A673 (cell line): ENCODE measurements at regions of chr15 and their contacts with region 1.

Region 1: GRCh38 chr15:47196057-47196456 is 521.2 kb upstream of the SEMA6D start:
- DNase-seq: peak; percentile 98
- H3K4me3 ChIP-seq: no peak overlapping the region
- H3K27ac ChIP-seq: peak overlapping the region; percentile 22
- H3K4me1 ChIP-seq: peaks cover 46% of the 10 kb centered on the region
- H3K27me3 ChIP-seq: no peaks in the 10 kb centered on the region
- CTCF ChIP-seq: peak; percentile 88

Region 2: GRCh38 chr15:47129033-47129432 is 67.0 kb before region 1 on chr15:
- CTCF ChIA-PET with region 1: no interaction called
- POLR2A ChIA-PET with region 1: no interaction called
- intact Hi-C with region 1: no loop called
- DNase-seq: no peak
- H3K4me3 ChIP-seq: no peak overlapping the region
- H3K27ac ChIP-seq: no peak overlapping the region
- H3K4me1 ChIP-seq: no peaks in the 10 kb centered on the region
- H3K27me3 ChIP-seq: peaks cover 5% of the 10 kb centered on the region
- CTCF ChIP-seq: no peak

Region 3: DNA sequence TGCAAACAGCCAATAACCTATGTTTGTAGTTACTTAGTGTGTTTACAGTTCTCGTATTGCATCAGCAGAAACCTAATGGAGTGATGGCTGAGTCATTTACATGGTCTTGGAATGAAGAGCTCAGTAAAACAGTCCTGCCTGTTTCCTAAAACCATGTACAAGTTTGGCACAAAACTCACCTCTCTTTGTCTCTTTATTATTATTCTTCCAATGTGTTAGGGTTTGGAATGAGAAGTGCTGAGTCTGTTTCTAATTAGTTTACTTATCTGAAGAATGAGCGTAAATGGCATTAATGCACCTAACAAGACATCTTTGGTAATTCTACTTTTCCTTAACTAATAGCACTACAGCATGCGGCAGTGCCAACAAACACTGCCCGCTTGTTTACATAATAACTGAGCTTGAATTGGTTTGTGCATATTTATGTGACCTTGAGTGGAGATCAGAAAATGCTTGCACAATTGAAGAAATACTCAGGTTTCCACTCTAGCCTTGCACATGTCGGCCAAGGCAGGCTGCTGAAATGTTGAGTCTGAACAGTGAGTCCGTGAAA is 135.9 kb after region 1 on chr15:
- CTCF ChIA-PET with region 1: no interaction called
- POLR2A ChIA-PET with region 1: no interaction called
- intact Hi-C with region 1: no loop called
- DNase-seq: peak; percentile 16
- H3K4me3 ChIP-seq: no peak overlapping the region
- H3K27ac ChIP-seq: peak overlapping the region; percentile 3
- H3K4me1 ChIP-seq: peaks cover 12% of the 10 kb centered on the region
- H3K27me3 ChIP-seq: no peaks in the 10 kb centered on the region
- CTCF ChIP-seq: no peak

Region 4: GRCh38 chr15:47422901-47423665 is 227.0 kb after region 1 on chr15:
- CTCF ChIA-PET with region 1: interaction called, 3 read pairs
- POLR2A ChIA-PET with region 1: interaction called, 3 read pairs
- intact Hi-C with region 1: loop called (anchors 1 kb)
- DNase-seq: no peak
- H3K4me3 ChIP-seq: no peak overlapping the region
- H3K27ac ChIP-seq: peak overlapping the region; percentile 84
- H3K4me1 ChIP-seq: peaks cover 68% of the 10 kb centered on the region
- H3K27me3 ChIP-seq: no peaks in the 10 kb centered on the region
- CTCF ChIP-seq: no peak

Region 5: DNA sequence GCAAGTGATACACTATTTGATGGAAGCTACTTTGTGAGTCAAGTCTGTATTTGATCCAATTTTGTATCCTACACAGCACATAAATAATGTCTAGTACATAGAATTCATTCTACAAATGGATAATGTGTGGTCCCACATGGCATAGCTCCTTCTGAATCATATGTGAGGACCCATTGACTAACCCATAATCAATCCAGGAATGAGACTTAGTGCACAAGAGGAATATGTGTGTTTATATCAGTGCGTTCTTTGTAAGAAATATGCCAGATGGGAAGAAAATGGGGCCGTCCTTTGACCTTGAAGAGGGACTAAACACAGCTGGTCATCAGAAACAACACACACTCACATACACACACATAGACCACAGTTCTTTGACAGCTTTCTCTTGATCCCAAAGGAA is 238.5 kb after region 1 on chr15:
- CTCF ChIA-PET with region 1: no interaction called
- POLR2A ChIA-PET with region 1: no interaction called
- intact Hi-C with region 1: no loop called
- DNase-seq: no peak
- H3K4me3 ChIP-seq: no peak overlapping the region
- H3K27ac ChIP-seq: no peak overlapping the region
- H3K4me1 ChIP-seq: no peaks in the 10 kb centered on the region
- H3K27me3 ChIP-seq: no peaks in the 10 kb centered on the region
- CTCF ChIP-seq: no peak

Region 6: DNA sequence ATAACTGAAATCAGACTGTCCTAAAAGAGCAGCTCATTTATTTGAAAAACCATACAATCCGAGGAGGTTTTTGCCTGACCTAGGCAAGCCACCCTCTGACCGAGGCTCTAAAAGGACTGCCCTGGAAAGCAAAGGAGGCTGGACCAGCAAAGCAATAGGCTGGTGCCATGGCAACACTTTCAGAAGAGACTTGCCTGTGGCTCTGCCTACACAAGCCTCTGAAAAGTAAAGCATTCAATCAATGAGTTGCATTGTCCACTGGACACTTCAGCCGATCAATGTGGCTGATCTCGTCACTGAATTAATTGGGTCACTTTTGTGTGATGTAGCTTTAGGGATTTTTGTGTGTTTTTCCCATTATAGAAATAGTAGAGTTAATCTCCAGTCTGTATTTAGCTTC is 422.2 kb after region 1 on chr15:
- CTCF ChIA-PET with region 1: interaction called, 5 read pairs
- POLR2A ChIA-PET with region 1: no interaction called
- intact Hi-C with region 1: loop called (anchors 1 kb)
- DNase-seq: no peak
- H3K4me3 ChIP-seq: no peak overlapping the region
- H3K27ac ChIP-seq: no peak overlapping the region
- H3K4me1 ChIP-seq: peaks cover 8% of the 10 kb centered on the region
- H3K27me3 ChIP-seq: no peaks in the 10 kb centered on the region
- CTCF ChIP-seq: no peak

Region 7: GRCh38 chr15:47663101-47663500 is 467.0 kb after region 1 on chr15:
- CTCF ChIA-PET with region 1: no interaction called
- POLR2A ChIA-PET with region 1: no interaction called
- intact Hi-C with region 1: no loop called
- DNase-seq: no peak
- H3K4me3 ChIP-seq: no peak overlapping the region
- H3K27ac ChIP-seq: no peak overlapping the region
- H3K4me1 ChIP-seq: peaks cover 31% of the 10 kb centered on the region
- H3K27me3 ChIP-seq: no peaks in the 10 kb centered on the region
- CTCF ChIP-seq: no peak

Region 8: DNA sequence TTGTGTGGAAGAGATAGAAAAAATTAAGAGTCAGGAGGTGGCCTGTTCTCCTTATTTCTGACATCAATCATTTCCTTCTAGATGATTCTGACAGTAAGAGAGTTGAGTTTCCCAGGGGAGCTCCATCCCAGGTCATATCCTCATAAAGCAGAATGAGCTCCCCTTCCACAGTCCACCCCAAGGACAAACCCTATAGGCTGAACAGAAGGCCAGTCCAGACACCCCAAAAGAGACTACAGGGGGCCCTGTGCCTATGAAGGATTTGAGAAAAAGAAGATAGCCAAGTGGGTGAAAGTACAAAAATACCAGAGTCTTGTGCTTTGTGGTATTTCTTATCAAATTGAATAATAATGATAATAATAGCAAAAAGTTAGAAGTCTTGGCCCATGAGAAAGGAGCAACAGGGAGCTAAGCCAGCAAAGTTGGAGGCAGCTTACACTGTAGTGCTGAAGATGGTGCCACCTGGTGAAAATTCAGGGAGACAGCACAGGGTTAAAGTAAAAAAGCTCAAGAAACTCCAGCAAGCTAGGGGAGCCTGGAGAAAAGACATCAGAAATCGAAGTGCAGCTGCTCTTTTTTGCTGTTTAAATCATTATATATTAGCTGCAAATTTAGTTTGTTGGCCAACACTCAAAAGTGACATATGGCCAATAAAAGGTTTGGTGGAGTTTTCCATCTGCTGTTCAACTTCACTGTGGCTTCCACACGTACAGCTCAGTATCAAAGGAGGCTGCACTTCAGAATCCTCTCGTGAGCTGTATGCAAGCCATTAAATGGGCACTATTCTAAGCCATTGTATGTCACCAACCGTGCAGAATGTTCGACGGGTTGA is 888.9 kb after region 1 on chr15:
- CTCF ChIA-PET with region 1: interaction called, 20 read pairs
- POLR2A ChIA-PET with region 1: no interaction called
- intact Hi-C with region 1: loop called (anchors 2 kb)
- DNase-seq: peak; percentile 73
- H3K4me3 ChIP-seq: no peak overlapping the region
- H3K27ac ChIP-seq: no peak overlapping the region
- H3K4me1 ChIP-seq: no peaks in the 10 kb centered on the region
- H3K27me3 ChIP-seq: no peaks in the 10 kb centered on the region
- CTCF ChIP-seq: peak; percentile 75

Region 9: GRCh38 chr15:48352474-48353072 is 1156.5 kb after region 1 on chr15:
- CTCF ChIA-PET with region 1: no interaction called
- POLR2A ChIA-PET with region 1: no interaction called
- intact Hi-C with region 1: loop called (anchors 10 kb)
- DNase-seq: peak; percentile 83
- H3K4me3 ChIP-seq: no peak overlapping the region
- H3K27ac ChIP-seq: no peak overlapping the region
- H3K4me1 ChIP-seq: no peaks in the 10 kb centered on the region
- H3K27me3 ChIP-seq: no peaks in the 10 kb centered on the region
- CTCF ChIP-seq: peak; percentile 89